Aorta (tissue), 5 donors: ENCODE measurements at regions of chr9 and their contacts with region 1.

Region 1: DNA sequence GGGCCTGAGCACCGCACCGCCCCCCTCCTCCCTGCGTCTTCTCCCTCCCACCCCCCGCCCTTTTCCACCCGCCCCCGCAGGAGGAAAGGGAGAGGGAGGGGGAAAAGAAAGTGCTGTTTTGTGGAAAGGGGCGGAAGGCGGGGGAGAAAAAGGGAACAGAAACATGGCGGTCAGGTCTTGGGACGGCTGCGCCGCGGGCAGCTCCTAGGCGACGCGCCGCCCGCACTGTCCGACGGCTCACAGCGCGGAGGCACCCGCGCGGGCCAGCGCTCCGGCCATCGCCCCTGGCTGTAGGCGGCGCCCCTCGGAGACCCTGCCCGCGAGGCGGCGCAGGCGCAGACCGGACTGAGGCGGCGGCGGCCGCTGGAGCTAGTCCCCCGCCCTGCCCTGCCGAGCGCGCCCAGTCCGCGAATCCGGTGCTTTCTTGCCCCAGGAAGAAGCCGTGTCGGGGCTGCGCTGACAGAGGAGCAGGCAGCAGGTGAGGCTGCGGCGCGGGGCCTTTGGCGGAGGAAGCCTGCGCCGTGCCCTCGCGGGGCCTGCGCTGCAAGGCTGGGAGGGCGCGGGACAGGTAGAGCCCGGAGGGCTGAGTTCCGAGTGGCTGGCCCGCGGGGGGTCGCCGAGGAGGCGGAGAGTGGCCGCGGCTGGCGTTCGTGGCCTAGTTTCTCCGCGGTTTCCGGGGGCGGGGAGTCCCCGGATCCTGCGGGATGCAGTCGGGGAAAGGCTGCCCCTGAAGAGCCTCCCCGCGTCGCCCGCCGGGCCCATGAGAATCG is at the start of gene DENND4C:
- DNase-seq: peak; percentile 91 to 95
- ATAC-seq: peak; percentile 95
- H3K4me3 ChIP-seq: peak within 1 kb of the TSS; percentile 60 to 97
- H3K27ac ChIP-seq: peak within 1 kb of the TSS; percentile 3 to 85
- H3K4me1 ChIP-seq: peaks cover 0 to 1% of the 10 kb centered on the region in 2 donors
- H3K27me3 ChIP-seq: no peaks in the 10 kb centered on the region
- total RNA-seq, gene DENND4C: 48.7 to 68.0 TPM

Region 2: GRCh38 chr9:19127881-19128500 is 102.5 kb before region 1 on chr9:
- intact Hi-C with region 1: loop called in 1 of 2 experiments (anchors 10 kb)
- DNase-seq: peak; percentile 62 to 80
- ATAC-seq: peak; percentile 56
- H3K4me3 ChIP-seq: peak overlapping the region; percentile 55 to 62
- H3K27ac ChIP-seq: peak overlapping the region; percentile 17 to 87
- H3K4me1 ChIP-seq: no peaks in the 10 kb centered on the region
- H3K27me3 ChIP-seq: no peaks in the 10 kb centered on the region

Region 3: DNA sequence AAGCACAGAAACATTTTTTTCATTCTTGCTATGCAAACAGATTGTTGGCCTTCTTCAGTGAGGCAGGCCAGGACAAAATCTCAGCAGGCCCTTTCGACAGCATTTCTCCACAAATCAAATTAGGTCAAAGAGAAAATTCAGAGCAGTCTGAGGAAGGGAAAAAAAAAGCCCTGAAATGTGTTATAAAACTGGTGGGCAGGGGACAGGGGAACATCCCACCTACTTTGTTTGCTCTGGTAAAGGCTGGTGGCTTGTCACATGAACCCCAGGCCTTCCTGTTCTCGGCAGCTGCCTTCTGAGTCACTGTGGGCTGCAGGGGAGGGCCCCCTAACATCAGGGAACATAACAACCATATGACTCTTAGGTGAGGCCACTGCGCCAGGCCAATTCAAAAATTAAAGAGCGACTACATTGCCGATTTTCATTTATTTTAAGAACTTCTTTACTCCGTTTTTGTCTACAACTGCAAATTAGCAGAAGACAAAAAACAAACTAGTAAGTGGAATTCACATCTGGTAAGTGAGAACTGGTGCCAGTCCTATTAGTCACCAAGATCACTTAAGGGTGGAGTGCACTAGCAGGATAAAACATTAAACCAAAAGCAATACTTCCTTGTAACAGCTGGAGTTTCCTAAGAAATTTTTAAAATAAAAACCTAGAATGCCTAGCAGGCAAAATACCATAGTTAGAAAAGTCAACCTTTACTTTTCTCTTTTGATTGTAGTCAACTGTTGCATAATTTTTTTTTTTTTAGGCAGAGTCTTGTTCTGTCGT is 46.2 kb before region 1 on chr9:
- intact Hi-C with region 1: loop called in 1 of 2 experiments (anchors 2 kb)
- DNase-seq: peak; percentile 87 to 92
- ATAC-seq: peak; percentile 95
- H3K4me3 ChIP-seq: no peak overlapping the region
- H3K27ac ChIP-seq: peak overlapping the region; percentile 89 to 97
- H3K4me1 ChIP-seq: no peaks in the 10 kb centered on the region
- H3K27me3 ChIP-seq: no peaks in the 10 kb centered on the region

Region 4: GRCh38 chr9:19294219-19294618 is 63.7 kb after region 1 on chr9:
- intact Hi-C with region 1: loop called in 1 of 2 experiments (anchors 5 kb)
- DNase-seq: no peak
- ATAC-seq: no peak
- H3K4me3 ChIP-seq: no peak overlapping the region
- H3K27ac ChIP-seq: no peak overlapping the region
- H3K4me1 ChIP-seq: no peaks in the 10 kb centered on the region
- H3K27me3 ChIP-seq: no peaks in the 10 kb centered on the region

Region 5: GRCh38 chr9:19306568-19306967 is 76.0 kb after region 1 on chr9:
- intact Hi-C with region 1: loop called in 1 of 2 experiments (anchors 10 kb)
- DNase-seq: no peak
- ATAC-seq: no peak
- H3K4me3 ChIP-seq: no peak overlapping the region
- H3K27ac ChIP-seq: no peak overlapping the region
- H3K4me1 ChIP-seq: no peaks in the 10 kb centered on the region
- H3K27me3 ChIP-seq: no peaks in the 10 kb centered on the region

Region 6: DNA sequence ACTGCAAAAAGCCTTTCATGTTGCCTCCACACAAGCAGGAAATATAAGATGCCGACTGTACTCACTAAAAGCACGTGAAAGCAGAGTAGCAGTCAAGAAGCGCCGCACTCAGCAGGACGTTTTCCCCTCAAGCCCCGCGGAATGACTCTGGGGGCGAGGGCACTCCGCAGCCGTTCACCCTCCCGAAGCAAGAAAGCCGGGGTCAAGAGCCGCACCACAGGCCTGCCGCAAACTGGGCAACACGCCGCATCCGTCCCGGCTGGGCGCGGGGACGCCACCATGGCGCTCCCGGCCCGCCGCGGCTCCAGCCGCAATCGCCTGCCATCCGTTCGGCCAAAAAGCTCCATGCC is 149.1 kb after region 1 on chr9:
- intact Hi-C with region 1: loop called in 1 of 2 experiments (anchors 10 kb)
- DNase-seq: peak in 1 of 2 donors; percentile 63
- ATAC-seq: peak; percentile 74
- H3K4me3 ChIP-seq: peak overlapping the region; percentile 5 to 54
- H3K27ac ChIP-seq: peak overlapping the region; percentile 49 to 73
- H3K4me1 ChIP-seq: no peaks in the 10 kb centered on the region
- H3K27me3 ChIP-seq: no peaks in the 10 kb centered on the region

Region 7: GRCh38 chr9:19456996-19457692 is 226.6 kb after region 1 on chr9:
- intact Hi-C with region 1: loop called in 1 of 2 experiments (anchors 5 kb)
- DNase-seq: peak in 1 of 2 donors; percentile 58
- ATAC-seq: peak; percentile 94
- H3K4me3 ChIP-seq: no peak overlapping the region
- H3K27ac ChIP-seq: peak overlapping the region; percentile 80 to 87
- H3K4me1 ChIP-seq: peaks cover 0 to 3% of the 10 kb centered on the region in 2 donors
- H3K27me3 ChIP-seq: no peaks in the 10 kb centered on the region

Region 8: DNA sequence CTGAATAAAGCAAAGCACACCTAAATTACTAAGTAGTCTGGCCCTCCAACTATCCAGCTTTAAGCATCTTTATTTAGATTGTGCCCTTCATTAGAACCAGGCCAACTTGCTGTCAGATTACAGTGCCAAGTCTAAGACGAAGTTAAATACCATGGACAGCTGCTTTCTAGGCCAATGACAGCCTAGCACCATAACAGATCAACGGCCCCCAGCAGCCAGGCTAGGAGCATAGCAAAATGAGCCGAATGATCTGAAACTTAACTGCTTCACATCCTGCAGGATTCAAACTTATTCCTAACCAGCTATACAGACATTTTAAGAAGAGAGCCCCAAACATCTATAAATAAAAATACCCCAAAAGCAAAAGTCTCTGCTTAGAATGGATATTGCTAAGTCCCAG is 551.5 kb after region 1 on chr9:
- intact Hi-C with region 1: no loop called
- DNase-seq: no peak
- ATAC-seq: no peak
- H3K4me3 ChIP-seq: no peak overlapping the region
- H3K27ac ChIP-seq: no peak overlapping the region
- H3K4me1 ChIP-seq: no peaks in the 10 kb centered on the region
- H3K27me3 ChIP-seq: no peaks in the 10 kb centered on the region